ENCODE measurements at regions of chr17 and their contacts with region 1.

Region 1: DNA sequence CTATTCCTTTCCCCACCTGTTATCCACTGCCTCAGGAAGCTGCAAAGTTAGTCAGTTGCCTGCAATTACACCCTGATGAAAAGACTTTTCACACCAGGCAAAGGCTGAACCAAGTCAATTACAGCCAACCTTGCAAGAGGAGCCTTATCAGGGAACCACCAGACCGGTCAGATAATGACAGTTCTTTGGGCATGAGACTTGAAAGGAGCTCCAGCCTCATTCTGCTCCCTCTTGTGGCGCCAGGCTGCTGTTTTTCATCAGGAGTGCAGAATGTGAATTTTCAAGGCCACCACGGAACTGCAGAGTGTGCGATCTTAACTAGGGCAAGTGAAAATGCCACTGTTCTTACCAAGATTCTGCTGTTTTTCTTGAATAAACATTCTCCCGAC is 22.5 kb downstream of the DNAI2 start:
- DNase-seq: peak; percentile 86
- ATAC-seq: peak; percentile 90

Region 2: GRCh38 chr17:74212913-74213791 is 83.4 kb before region 1 on chr17 and contains the start of gene TTYH2:
- intact Hi-C with region 1: loop called (anchors 5 kb)
- DNase-seq: peak; percentile 93
- ATAC-seq: peak; percentile 92
- total RNA-seq, gene TTYH2: 46.7 TPM

Region 3: DNA sequence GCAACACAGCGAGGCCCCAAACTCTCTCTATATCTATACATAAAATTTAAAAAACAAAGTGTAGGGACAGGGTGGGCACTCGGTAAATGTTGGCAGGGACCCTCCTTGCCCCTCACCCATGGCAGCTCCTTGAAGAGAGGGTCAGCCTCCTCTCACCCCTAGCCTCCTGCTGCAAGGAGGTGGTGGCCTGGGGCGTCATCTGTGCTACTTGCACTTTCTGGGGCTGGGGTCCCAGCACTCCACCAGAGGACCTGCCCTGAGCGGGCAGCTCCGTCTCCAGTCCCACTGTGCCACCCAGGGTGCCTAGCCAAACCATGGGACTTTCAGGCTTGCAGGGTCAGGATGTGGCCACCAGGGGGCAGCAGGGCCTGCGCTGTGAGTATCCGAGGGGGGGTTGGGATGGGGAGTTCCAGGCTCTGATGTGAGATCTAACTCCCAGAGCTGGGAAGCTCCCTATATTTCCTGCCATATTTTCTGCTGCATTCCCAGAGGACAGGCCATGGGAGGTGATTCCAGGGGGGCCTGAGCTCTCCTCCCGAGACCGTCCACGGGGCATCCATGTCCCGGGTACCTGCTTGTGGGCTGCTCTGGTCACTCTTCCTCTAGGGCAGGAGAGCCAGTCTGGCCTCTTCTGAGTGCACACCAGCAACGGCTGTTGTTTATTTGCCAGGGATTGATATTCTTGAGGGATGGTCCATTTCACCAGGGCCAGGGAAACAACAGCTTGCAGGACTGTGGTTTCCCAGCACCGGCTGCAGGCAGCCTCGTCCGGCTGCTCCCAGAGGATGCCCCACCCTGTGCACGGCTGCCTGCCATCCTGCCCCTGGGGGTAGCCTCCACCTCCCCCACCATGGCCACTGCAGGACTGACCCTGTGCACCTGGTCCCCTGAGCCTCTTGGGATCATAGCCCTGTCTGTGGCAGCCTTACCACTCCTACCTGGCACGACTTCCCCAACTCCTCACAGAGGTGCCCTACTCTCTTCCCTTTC is 71.8 kb after region 1 on chr17:
- intact Hi-C with region 1: no loop called
- DNase-seq: peak; percentile 85
- ATAC-seq: peak; percentile 83

Region 4: GRCh38 chr17:74998783-74999182 is 702.2 kb after region 1 on chr17:
- intact Hi-C with region 1: no loop called
- DNase-seq: no peak
- ATAC-seq: no peak